Naive thymus-derived CD4-positive, alpha-beta T cell (primary cell): ENCODE measurements at regions of chr12 and their contacts with region 1.

Region 1: GRCh38 chr12:50084775-50085614 is at the start of gene SMARCD1:
- DNase-seq: peak; percentile 65 to 85 (median 76)
- ATAC-seq: peak; percentile 92
- H3K4me3 ChIP-seq: peak within 1 kb of the TSS; percentile 82
- H3K4me3 Mint-ChIP-seq: peak within 1 kb of the TSS; percentile 87 to 98 (median 94)
- H3K27ac ChIP-seq: peak within 1 kb of the TSS; percentile 98
- H3K27ac Mint-ChIP-seq: peak within 1 kb of the TSS; percentile 93 to 99 (median 96)
- H3K4me1 ChIP-seq: peaks cover 0 to 5% of the 10 kb centered on the region in 2 donors
- H3K4me1 Mint-ChIP-seq: peaks cover 6 to 46% (median 40%) of the 10 kb centered on the region in 7 donors
- H3K27me3 ChIP-seq: no peaks in the 10 kb centered on the region
- H3K27me3 Mint-ChIP-seq: no peaks in the 10 kb centered on the region
- total RNA-seq, gene SMARCD1: 65.1 to 88.5 (median 67.5) TPM

Region 2: DNA sequence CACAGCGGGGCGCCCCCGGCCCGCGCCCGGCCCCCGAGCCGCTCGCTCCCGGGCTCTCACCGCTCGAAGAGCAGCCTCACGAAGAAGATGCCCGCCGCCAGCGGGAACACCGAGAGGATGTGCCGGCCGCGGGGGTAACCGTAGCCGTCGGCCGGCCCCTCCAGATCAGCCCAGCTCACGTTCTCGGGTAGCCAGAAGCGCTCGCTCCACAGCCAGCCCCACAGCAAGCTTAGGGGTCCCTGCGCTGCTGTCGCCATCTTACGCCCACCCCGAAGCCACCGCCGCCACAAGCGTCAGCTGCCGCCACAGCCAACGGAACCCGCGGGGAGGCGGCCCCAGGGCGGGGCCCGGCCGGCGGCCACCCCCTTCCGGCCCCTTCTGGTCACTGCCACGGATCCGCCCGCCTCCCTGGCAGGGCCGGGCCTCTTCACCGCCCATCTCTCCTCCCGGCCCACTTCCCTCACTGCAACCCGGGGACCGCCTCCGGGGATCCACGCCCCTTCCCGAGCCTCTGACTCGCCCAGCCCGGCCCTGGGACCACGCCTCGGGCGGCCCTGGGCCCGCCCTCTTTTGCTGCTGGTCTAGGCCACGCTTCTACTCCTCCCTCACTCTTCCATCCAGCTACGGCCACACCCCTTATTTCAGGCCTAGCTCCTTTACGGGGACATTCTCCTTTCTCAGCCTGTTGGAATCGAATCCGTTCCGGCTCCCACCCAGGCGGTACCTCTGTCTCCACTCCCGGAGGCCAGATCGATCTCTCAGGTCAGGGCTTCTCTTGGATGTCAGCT is 82.2 kb after region 1 on chr12 and contains the start of gene CERS5:
- CTCF ChIA-PET with region 1: interaction called, 9 read pairs
- POLR2A ChIA-PET with region 1: interaction called, 8 read pairs
- intact Hi-C with region 1: loop called (anchors 1 kb)
- DNase-seq: peak; percentile 87 to 98 (median 93)
- ATAC-seq: peak; percentile 99
- H3K4me3 ChIP-seq: peak within 1 kb of the TSS; percentile 69
- H3K4me3 Mint-ChIP-seq: peak within 1 kb of the TSS; percentile 82 to 98 (median 93)
- H3K27ac ChIP-seq: peak within 1 kb of the TSS; percentile 93
- H3K27ac Mint-ChIP-seq: peak within 1 kb of the TSS; percentile 84 to 98 (median 93)
- H3K4me1 ChIP-seq: peaks cover 11 to 13% of the 10 kb centered on the region in 2 donors
- H3K4me1 Mint-ChIP-seq: peaks cover 16 to 36% (median 30%) of the 10 kb centered on the region in 7 donors
- H3K27me3 ChIP-seq: no peaks in the 10 kb centered on the region
- H3K27me3 Mint-ChIP-seq: no peaks in the 10 kb centered on the region
- total RNA-seq, gene CERS5: 41.0 to 52.2 (median 47.7) TPM

Region 3: GRCh38 chr12:50222275-50222795 is 137.3 kb after region 1 on chr12:
- CTCF ChIA-PET with region 1: interaction called, 4 read pairs
- POLR2A ChIA-PET with region 1: interaction called, 3 read pairs
- intact Hi-C with region 1: loop called in 1 of 2 experiments (anchors 1 kb)
- DNase-seq: peak in 8 of 9 donors; percentile 17 to 47 (median 33)
- ATAC-seq: peak; percentile 48
- H3K4me3 ChIP-seq: peak overlapping the region; percentile 70
- H3K4me3 Mint-ChIP-seq: no peak overlapping the region
- H3K27ac ChIP-seq: peak overlapping the region; percentile 74
- H3K27ac Mint-ChIP-seq: no peak overlapping the region
- H3K4me1 ChIP-seq: peaks cover 11 to 23% of the 10 kb centered on the region in 2 donors
- H3K4me1 Mint-ChIP-seq: peaks cover 6 to 42% (median 33%) of the 10 kb centered on the region in 7 donors
- H3K27me3 ChIP-seq: no peaks in the 10 kb centered on the region
- H3K27me3 Mint-ChIP-seq: no peaks in the 10 kb centered on the region

Region 4: GRCh38 chr12:50400598-50401364 is 315.8 kb after region 1 on chr12 and contains the start of gene LARP4:
- CTCF ChIA-PET with region 1: no interaction called
- POLR2A ChIA-PET with region 1: no interaction called
- intact Hi-C with region 1: loop called (anchors 2 kb)
- DNase-seq: peak; percentile 70 to 92 (median 88)
- ATAC-seq: peak; percentile 98
- H3K4me3 ChIP-seq: peak within 1 kb of the TSS; percentile 66
- H3K4me3 Mint-ChIP-seq: peak within 1 kb of the TSS; percentile 81 to 100 (median 99)
- H3K27ac ChIP-seq: peak within 1 kb of the TSS; percentile 77
- H3K27ac Mint-ChIP-seq: peak within 1 kb of the TSS; percentile 86 to 97 (median 95)
- H3K4me1 ChIP-seq: peaks cover 9 to 12% of the 10 kb centered on the region in 2 donors
- H3K4me1 Mint-ChIP-seq: peaks cover 23 to 55% (median 37%) of the 10 kb centered on the region in 7 donors
- H3K27me3 ChIP-seq: no peaks in the 10 kb centered on the region
- H3K27me3 Mint-ChIP-seq: peaks cover 0 to 13% (median 6%) of the 10 kb centered on the region in 5 donors
- total RNA-seq, gene LARP4: 22.1 to 68.9 (median 38.4) TPM